ENCODE measurements at regions of chr10 and their contacts with region 1.

Region 1: DNA sequence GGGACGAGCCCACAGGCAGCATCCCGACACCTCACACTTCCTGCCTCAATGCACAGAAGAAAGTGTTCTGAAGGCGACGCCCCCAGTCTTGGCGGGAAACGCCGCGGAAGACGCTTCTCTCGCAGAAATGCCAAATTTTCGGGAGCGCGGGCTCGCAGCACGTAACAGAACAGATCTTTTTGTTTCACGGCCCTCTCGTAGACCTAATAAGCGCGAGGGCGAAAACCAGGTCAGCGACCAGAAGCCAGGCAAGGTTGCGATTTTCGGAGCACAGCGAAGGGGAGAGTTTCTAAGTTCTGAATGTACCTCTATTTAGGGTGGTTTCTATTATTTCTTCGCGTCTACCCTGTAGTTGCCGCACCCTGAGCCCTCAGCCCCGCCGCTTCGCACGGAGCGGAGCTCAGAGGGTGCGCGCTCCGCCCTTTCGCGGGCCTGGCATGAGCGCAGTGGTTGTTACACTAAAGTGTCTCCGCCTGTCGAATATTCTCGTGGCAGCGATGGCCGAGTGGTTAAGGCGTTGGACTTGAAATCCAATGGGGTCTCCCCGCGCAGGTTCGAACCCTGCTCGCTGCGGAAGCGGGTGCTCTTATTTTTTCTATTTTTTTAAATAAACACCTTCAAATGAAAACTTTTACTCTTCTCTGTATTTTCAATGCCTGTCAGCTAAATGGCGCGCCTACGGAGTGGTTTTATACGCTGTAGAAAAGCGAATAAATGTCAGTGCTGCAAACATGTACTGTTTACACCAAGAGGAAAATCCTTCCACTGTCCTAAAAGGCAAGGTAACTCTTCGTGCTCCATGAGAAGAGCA is 68.2 kb upstream of the CTNNA3 start:
- DNase-seq: peak; percentile 91 to 94
- ATAC-seq: peak; percentile 95 to 97 (median 96)
- H3K4me3 ChIP-seq: peak overlapping the region; percentile 55 to 95 (median 68)
- H3K27ac ChIP-seq: peak overlapping the region; percentile 77 to 98 (median 92)
- H3K4me1 ChIP-seq: peaks cover 0 to 15% (median 0%) of the 10 kb centered on the region in 9 donors
- H3K27me3 ChIP-seq: no peaks in the 10 kb centered on the region
- CTCF ChIP-seq: no peak

Region 2: DNA sequence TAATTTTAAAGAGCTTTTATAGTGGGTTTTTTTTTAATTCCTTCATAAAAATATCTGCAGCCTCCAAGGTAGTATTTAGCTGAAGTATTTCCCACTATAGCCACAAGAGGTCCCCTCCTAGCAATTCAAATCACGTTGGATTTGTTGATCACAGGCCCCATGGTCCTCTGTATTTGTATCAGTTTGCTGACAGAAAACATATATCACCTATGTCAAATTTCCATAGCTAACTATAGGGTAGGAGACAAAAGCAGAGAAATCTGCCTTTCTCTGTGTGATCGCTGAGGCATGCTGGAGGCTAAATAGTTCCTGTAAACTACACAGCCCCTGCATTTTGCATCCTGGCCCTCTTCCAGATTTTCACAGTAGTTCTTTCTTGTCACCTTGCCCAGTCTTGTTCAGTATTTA is 66.5 kb before region 1 on chr10:
- intact Hi-C with region 1: loop called in 2 of 10 experiments (anchors 1 to 5 kb)
- DNase-seq: peak in 1 of 2 donors; percentile 10
- ATAC-seq: peak in 6 of 8 donors; percentile 25 to 76 (median 54)
- H3K4me3 ChIP-seq: no peak overlapping the region
- H3K27ac ChIP-seq: peak overlapping the region in 4 of 10 donors; percentile 79 to 93 (median 88)
- H3K4me1 ChIP-seq: peaks cover 0 to 28% (median 10%) of the 10 kb centered on the region in 9 donors
- H3K27me3 ChIP-seq: peaks cover 0 to 19% (median 0%) of the 10 kb centered on the region in 7 donors
- CTCF ChIP-seq: peak; percentile 40 to 79 (median 71)

Region 3: GRCh38 chr10:67925449-67926005 is 161.3 kb after region 1 on chr10:
- intact Hi-C with region 1: no loop called
- DNase-seq: no peak
- ATAC-seq: no peak
- H3K4me3 ChIP-seq: no peak overlapping the region
- H3K27ac ChIP-seq: no peak overlapping the region
- H3K4me1 ChIP-seq: no peaks in the 10 kb centered on the region
- H3K27me3 ChIP-seq: no peaks in the 10 kb centered on the region
- CTCF ChIP-seq: no peak

Region 4: DNA sequence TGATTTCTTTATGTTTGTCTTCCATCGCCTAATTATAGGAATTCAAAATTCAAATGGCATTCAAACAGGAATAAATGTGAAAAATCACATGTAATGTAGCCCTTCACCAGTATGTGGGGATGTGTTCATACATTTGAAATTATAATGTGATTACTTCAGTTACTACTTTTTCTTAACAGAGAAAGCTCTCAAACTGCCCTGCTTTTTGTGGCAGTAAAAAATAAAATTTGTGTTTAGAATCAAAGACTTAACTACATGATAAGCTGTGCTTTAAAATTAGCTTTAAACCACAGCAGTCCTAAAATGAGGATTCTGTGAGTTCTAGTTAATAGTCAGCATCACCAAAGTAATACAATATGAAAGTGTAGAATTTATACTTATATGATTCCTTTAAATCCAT is 318.7 kb after region 1 on chr10:
- intact Hi-C with region 1: no loop called
- DNase-seq: no peak
- ATAC-seq: peak in 2 of 8 donors; percentile 32 to 39
- H3K4me3 ChIP-seq: no peak overlapping the region
- H3K27ac ChIP-seq: peak overlapping the region in 3 of 10 donors; percentile 5 to 50 (median 42)
- H3K4me1 ChIP-seq: peaks cover 0 to 27% (median 0%) of the 10 kb centered on the region in 9 donors
- H3K27me3 ChIP-seq: no peaks in the 10 kb centered on the region
- CTCF ChIP-seq: peak in 8 of 9 donors; percentile 10 to 61 (median 46)